ENCODE measurements at regions of chr1 and their contacts with region 1.

Region 1: GRCh38 chr1:68120136-68120791 is 69.8 kb upstream of the DIRAS3 start:
- DNase-seq: peak; percentile 57
- CTCF ChIP-seq: peak; percentile 76

Region 2: GRCh38 chr1:67570473-67571143 is 549.7 kb before region 1 on chr1:
- in situ Hi-C with region 1: no loop called
- DNase-seq: no peak
- CTCF ChIP-seq: no peak

Region 3: GRCh38 chr1:67803380-67804279 is 316.6 kb before region 1 on chr1:
- in situ Hi-C with region 1: no loop called
- DNase-seq: no peak
- CTCF ChIP-seq: no peak

Region 4: DNA sequence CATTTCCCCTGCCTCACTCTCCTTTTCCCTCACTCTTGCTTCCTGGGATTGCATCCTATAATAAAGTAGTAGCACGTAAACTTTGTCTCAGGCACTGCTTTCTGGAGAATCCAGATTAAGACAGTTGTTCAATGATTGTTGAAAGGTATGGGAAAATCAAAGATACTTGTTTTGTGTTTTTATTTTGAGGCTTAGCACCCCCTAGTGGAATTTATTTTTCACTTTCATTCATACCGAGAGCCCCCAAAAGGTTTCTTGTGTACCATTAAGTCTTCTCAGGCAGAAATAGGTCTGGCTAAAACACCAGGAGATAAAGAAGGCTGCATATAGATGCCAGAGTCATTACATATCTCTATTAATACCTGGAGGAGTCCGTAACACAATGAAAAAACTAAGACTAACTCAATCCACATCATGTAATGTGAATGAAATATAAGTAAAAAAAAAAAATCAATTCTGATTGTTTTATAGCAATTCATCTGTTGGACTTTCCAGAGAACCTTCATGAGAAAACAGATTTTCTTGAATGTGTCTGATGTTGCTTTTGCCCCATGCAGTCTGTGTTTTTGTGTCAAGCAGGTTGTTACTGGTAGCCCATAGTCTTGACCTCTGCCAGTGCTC is 226.0 kb after region 1 on chr1:
- in situ Hi-C with region 1: loop called (anchors 10 kb)
- DNase-seq: peak; percentile 15
- CTCF ChIP-seq: no peak

Region 5: GRCh38 chr1:69737527-69738185 is 1617.4 kb after region 1 on chr1:
- in situ Hi-C with region 1: loop called (anchors 25 kb)
- DNase-seq: peak; percentile 8
- CTCF ChIP-seq: no peak